Activated T-helper 1 cell treated with anti-CD3 and anti-CD28 coated beads, Interleukin-12 subunit alpha, Interleukin-12 subunit beta, Interleukin-2, Interleukin-4 antibody, amounts not matched to agents 30 ng/mL and 10 ng/mL and 1 ng/mL, durations not matched to agents 14 hours and 24 hours and 36 hours (primary cell): ENCODE measurements at regions of chr1 and their contacts with region 1.

Region 1: GRCh38 chr1:39653546-39654031 is 14.1 kb upstream of the HEYL start:
- DNase-seq: peak; percentile 67
- H3K4me3 Mint-ChIP-seq: no peak overlapping the region
- H3K27ac Mint-ChIP-seq: no peak overlapping the region
- H3K4me1 Mint-ChIP-seq: peaks cover 21% of the 10 kb centered on the region
- H3K27me3 Mint-ChIP-seq: peaks cover 3% of the 10 kb centered on the region

Region 2: GRCh38 chr1:39332291-39332690 is 321.3 kb before region 1 on chr1:
- intact Hi-C with region 1: loop called (anchors 10 kb)
- DNase-seq: no peak
- H3K4me3 Mint-ChIP-seq: no peak overlapping the region
- H3K27ac Mint-ChIP-seq: peak overlapping the region; percentile 82
- H3K4me1 Mint-ChIP-seq: peaks cover 68% of the 10 kb centered on the region
- H3K27me3 Mint-ChIP-seq: no peaks in the 10 kb centered on the region

Region 3: GRCh38 chr1:39720094-39720999 is 66.8 kb after region 1 on chr1:
- intact Hi-C with region 1: loop called (anchors 1 kb)
- DNase-seq: no peak
- H3K4me3 Mint-ChIP-seq: no peak overlapping the region
- H3K27ac Mint-ChIP-seq: no peak overlapping the region
- H3K4me1 Mint-ChIP-seq: no peaks in the 10 kb centered on the region
- H3K27me3 Mint-ChIP-seq: peaks cover 55% of the 10 kb centered on the region